Activated CD8-positive, alpha-beta T cell treated with anti-CD3 and anti-CD28 coated beads, Interleukin-2, amount 10 ng/mL, durations not matched to agents 7 days and 5 days (primary cell): ENCODE measurements at regions of chr4 and their contacts with region 1.

Region 1: DNA sequence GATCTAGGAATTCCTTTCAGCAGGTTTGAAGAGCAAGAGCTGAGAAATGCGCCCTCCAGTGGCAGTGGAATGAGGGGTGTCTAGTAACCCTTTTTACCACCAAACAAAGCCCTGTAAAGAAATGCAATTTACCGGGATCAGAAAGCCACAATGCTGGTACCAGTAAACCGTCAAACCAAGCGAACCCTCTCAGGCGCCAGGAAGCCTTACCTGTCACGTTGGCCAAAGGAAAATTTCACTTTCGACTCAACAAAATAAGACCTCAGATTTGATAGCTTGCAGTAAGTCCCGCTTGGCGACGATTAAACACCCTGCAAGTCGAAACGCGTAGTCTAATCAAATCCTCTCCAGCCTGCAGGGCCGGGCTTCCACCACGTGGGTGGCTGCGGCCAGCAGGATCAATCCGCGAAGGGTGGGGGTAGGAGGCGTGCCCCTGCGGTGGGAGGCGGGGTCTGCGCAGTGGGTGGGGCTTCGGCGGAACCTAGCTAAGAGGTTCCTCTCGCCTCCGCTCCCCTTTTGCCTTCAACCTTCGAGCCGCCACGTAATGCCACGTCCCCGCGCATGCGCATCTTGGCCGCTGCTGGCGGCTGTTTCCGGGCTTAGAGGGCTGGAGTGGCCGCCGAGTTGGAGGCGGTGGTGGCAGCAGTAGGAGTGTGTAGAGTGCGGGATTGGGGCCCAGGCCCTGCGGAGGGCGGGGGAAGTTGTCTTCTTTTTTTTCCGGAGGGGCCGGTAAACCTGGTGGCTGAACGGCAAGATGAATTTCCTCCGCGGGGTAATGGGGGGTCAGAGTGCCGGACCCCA is at the start of gene USO1:
- DNase-seq: peak; percentile 99
- ATAC-seq: peak; percentile 91
- H3K4me3 Mint-ChIP-seq: peak within 1 kb of the TSS; percentile 99
- H3K27ac Mint-ChIP-seq: peak within 1 kb of the TSS; percentile 98
- H3K4me1 Mint-ChIP-seq: peaks cover 40% of the 10 kb centered on the region
- H3K27me3 Mint-ChIP-seq: no peaks in the 10 kb centered on the region
- total RNA-seq, gene USO1: 32.5 to 37.5 TPM

Region 2: DNA sequence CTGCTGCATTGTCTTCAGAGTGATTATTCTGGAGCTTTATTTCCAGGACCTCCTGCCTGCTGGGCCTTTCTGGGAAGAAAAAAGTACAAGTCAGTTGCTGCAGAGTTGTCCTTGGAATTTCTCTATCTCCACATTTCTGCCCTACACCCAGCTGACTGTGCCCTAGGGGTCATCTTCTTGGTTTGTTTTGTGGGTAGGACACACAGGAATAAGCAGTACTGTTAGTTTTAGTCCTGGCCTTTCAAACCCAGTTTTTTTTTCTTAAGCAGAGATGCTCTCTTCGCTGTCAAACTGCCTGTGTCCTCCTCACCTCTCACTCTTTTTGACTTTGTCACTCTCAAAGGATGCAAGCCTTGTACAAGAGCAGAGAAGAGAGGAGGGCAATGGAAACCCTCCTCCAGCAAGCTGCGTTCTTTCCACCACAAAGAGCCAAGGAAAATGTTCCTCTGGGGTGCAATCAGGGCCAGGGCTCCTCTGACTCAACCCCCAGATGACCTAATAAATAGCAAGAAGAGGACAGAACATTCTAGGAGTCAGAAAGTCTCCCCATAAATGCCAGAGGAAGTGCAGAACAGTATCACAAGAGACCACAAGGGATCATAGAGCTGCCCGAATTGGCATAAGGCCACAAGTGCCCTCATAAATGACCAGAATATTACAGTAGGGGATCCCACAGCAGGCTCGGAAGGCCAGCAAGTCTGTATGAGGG is 396.3 kb before region 1 on chr4:
- CTCF ChIA-PET with region 1: no interaction called
- POLR2A ChIA-PET with region 1: no interaction called
- DNase-seq: no peak
- ATAC-seq: no peak
- H3K4me3 Mint-ChIP-seq: no peak overlapping the region
- H3K27ac Mint-ChIP-seq: no peak overlapping the region
- H3K4me1 Mint-ChIP-seq: no peaks in the 10 kb centered on the region
- H3K27me3 Mint-ChIP-seq: no peaks in the 10 kb centered on the region

Region 3: DNA sequence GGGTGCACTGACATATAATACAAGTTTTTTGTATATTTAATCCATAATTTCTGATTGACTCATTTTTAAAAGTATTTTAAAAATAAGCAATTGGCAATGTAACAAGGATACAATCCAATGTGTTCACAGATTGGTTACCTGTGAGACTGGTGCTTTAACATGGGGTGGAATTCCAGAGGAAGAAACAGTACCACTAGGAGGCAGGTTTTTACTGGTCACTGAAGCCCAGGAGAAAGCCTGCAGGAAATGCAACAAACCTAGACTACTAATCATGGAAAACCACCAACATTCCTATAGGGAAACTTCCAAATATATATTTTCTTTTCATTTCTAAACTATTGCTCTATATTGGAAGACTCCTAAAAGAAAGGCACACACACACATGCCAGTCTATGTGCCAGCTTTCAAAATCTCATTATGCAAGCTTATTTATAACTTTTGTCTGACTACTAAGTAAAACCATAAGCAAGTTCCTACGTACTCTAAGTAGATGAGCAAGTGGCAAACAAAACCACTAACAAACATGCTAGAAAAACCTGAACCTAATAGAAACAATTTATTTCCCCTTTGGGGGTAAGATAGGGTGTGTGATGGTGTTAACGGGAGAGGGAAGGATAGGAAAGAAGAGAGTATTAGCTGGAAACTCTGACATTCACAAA is 70.3 kb before region 1 on chr4:
- CTCF ChIA-PET with region 1: interaction called, 47 read pairs
- POLR2A ChIA-PET with region 1: interaction called, 35 read pairs
- DNase-seq: no peak
- ATAC-seq: peak; percentile 5
- H3K4me3 Mint-ChIP-seq: peak overlapping the region; percentile 53
- H3K27ac Mint-ChIP-seq: peak overlapping the region; percentile 86
- H3K4me1 Mint-ChIP-seq: peaks cover 64% of the 10 kb centered on the region
- H3K27me3 Mint-ChIP-seq: no peaks in the 10 kb centered on the region

Region 4: DNA sequence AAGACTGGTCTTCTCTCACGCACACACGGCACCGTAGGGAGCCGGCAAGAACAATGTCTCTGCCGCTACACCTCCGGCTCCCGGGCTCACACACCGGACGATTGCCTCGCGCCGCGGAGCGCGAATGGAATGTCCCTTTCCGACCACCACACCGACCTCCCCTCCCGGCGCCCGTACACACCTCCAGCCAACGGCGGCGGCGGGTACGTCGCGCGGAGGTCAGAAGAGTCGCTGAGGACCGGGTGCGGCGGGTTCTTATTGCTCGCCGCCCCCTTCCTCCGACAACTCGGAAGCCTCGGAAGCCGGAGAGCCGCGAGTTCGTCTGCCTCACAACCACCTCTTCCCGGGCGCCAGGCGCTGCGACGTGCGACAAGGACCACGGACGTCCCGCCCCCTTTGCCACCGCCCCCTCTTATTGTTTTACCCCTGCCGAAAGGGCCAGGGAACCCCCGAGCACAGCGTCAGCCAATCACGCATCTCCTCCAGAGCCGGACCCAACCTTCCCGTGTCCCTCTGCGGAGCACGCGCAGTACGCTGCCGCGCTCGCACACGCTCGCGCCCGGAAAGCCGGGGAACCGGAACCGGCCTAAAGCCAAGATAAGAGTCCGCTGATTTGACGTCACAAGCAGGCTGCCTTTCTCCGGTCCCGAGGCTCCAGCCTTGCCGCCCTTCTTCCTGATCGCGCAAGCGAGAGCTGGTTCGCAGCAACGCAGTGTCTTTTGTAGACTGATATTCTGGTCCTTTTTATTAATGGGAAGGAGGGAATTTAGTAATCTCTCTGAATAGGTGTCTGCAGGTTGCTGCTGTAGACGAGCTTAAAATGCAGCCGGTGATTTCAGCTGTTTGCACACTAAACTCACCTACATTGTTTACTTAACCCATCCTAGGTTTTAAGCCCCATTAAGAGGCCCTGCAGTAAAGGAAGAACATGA is 51.0 kb before region 1 on chr4 and contains the start of gene G3BP2:
- CTCF ChIA-PET with region 1: interaction called, 47 read pairs
- POLR2A ChIA-PET with region 1: interaction called, 44 read pairs
- DNase-seq: peak; percentile 99
- ATAC-seq: peak; percentile 94
- H3K4me3 Mint-ChIP-seq: peak within 1 kb of the TSS; percentile 99
- H3K27ac Mint-ChIP-seq: peak within 1 kb of the TSS; percentile 99
- H3K4me1 Mint-ChIP-seq: peaks cover 46% of the 10 kb centered on the region
- H3K27me3 Mint-ChIP-seq: no peaks in the 10 kb centered on the region
- total RNA-seq, gene G3BP2: 173 to 178 TPM

Region 5: GRCh38 chr4:75698162-75698962 is 25.9 kb before region 1 on chr4:
- CTCF ChIA-PET with region 1: interaction called, 32 read pairs
- POLR2A ChIA-PET with region 1: interaction called, 3 read pairs
- DNase-seq: peak; percentile 54
- ATAC-seq: peak; percentile 71
- H3K4me3 Mint-ChIP-seq: peak overlapping the region; percentile 39
- H3K27ac Mint-ChIP-seq: peak overlapping the region; percentile 85
- H3K4me1 Mint-ChIP-seq: peaks cover 40% of the 10 kb centered on the region
- H3K27me3 Mint-ChIP-seq: no peaks in the 10 kb centered on the region

Region 6: GRCh38 chr4:75745161-75745560 is 20.9 kb after region 1 on chr4:
- CTCF ChIA-PET with region 1: interaction called, 10 read pairs
- POLR2A ChIA-PET with region 1: interaction called, 3 read pairs
- DNase-seq: no peak
- ATAC-seq: no peak
- H3K4me3 Mint-ChIP-seq: no peak overlapping the region
- H3K27ac Mint-ChIP-seq: no peak overlapping the region
- H3K4me1 Mint-ChIP-seq: no peaks in the 10 kb centered on the region
- H3K27me3 Mint-ChIP-seq: no peaks in the 10 kb centered on the region

Region 7: DNA sequence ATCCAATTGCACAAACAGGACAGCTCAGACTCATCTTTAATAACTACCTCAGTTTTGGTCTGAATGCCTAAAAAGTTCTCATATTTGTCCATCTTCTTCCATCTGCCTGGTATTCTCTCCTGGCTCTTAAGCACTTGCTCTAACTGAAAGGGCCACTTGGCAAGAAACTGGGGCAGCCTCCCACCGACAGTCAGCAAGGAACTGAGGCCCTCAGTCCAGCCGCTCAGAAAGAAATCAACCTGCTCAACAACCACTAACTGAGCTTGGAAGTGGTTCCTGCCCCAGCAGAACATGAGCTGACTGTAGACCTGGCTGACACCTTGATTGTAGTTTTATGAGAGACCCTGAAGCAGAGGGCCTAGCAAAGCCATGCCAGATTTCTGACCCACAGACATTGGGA is 93.6 kb after region 1 on chr4:
- CTCF ChIA-PET with region 1: no interaction called
- POLR2A ChIA-PET with region 1: no interaction called
- DNase-seq: no peak
- ATAC-seq: no peak
- H3K4me3 Mint-ChIP-seq: no peak overlapping the region
- H3K27ac Mint-ChIP-seq: no peak overlapping the region
- H3K4me1 Mint-ChIP-seq: no peaks in the 10 kb centered on the region
- H3K27me3 Mint-ChIP-seq: no peaks in the 10 kb centered on the region

Region 8: DNA sequence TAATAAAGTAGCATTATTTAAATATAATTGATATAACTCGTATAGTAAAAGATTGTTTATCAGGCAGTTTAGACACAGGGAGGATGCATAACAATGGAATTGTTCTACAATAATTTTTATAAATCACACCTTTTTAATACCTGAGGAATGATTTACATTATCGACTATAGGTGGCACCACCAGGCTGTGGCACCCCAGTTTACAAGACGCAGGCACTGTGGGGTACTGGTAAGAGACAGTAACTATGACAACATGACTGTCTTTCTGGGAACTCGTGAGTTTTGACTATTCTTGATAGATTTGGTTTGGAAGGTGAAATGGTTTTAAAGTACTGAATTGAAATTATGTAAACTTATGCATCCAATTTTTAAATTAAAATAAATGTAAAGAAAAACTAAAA is 555.2 kb after region 1 on chr4:
- CTCF ChIA-PET with region 1: no interaction called
- POLR2A ChIA-PET with region 1: no interaction called
- DNase-seq: peak; percentile 47
- ATAC-seq: no peak
- H3K4me3 Mint-ChIP-seq: no peak overlapping the region
- H3K27ac Mint-ChIP-seq: no peak overlapping the region
- H3K4me1 Mint-ChIP-seq: peaks cover 8% of the 10 kb centered on the region
- H3K27me3 Mint-ChIP-seq: peaks cover 24% of the 10 kb centered on the region